ENCODE measurements at regions of chr5 and their contacts with region 1.

Region 1: DNA sequence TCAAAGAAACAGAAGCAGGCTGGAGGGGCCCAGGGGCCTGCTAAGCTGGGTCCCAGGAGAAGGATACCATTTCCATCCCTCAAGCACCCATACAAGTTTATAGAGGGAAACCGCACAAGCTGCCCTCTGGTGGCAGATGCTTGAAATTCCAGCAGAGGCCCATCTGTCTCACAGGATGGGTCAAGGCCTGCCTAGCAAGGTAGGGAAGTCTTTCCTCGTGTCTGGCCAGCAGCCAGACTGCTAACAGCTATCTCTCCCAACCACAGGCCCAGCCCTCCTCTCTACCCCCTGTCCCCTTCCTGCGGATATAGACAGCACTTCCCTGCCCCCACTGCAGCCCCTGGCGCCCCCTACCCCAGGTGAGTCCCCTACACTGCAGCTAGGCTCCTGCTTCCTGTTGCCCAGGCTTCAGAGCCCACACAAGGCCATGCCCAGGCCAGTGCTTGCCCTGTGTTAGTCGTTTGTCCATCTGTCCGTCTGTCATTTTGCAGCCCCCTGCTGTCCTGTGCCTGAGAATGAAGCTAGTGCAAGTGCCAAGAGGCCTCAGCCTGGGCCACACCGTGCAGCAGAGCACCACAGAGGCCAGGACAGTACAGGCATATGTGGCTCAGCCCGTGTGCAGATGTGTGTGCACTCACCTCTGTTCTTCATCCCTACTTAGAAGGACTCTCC is 26.2 kb downstream of the TCF7 start:
- DNase-seq: peak; percentile 63
- H3K4me3 ChIP-seq: no peak overlapping the region
- H3K27ac ChIP-seq: no peak overlapping the region
- H3K4me1 ChIP-seq: no peaks in the 10 kb centered on the region
- H3K27me3 ChIP-seq: no peaks in the 10 kb centered on the region
- CTCF ChIP-seq: peak; percentile 75 to 82
- POLR2A ChIP-seq: no peak

Region 2: DNA sequence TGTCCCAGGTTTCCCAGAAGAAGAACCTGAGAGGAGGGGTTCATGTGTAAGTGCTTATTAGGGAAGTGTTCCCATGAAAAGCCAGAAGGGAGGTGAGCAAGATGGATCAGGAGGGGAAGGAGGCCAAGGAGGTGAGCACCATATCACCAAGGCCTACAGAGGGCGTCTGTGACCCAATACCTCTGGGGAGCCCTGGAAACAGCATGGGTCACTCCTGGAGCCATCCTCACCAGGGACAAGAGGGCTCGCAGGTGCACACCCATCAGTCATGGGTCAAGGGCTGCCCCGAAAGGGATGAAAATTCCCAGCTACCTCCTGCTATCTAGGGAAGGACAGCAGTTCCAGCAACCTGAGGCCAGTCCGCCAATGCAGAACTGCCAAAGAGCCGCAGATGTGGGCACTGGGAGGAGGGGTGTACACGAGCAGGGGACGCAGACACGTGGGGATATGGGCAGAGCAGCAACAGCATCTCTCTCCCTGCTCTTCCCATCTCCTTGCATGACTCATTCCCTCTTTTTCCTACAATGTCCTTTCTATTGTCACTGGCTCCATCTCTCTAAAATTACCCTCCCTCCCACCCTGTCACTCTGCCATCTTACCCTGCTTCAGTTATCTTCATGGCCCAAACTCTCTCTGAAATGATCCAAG is 360.7 kb before region 1 on chr5:
- CTCF ChIA-PET with region 1: no interaction called
- POLR2A ChIA-PET with region 1: no interaction called
- dilution Hi-C with region 1: no loop called
- intact Hi-C with region 1: no loop called
- DNase-seq: no peak
- H3K4me3 ChIP-seq: no peak overlapping the region
- H3K27ac ChIP-seq: no peak overlapping the region
- H3K4me1 ChIP-seq: no peaks in the 10 kb centered on the region
- H3K27me3 ChIP-seq: peaks cover 0 to 5% of the 10 kb centered on the region in 2 experiments
- CTCF ChIP-seq: no peak
- POLR2A ChIP-seq: no peak

Region 3: DNA sequence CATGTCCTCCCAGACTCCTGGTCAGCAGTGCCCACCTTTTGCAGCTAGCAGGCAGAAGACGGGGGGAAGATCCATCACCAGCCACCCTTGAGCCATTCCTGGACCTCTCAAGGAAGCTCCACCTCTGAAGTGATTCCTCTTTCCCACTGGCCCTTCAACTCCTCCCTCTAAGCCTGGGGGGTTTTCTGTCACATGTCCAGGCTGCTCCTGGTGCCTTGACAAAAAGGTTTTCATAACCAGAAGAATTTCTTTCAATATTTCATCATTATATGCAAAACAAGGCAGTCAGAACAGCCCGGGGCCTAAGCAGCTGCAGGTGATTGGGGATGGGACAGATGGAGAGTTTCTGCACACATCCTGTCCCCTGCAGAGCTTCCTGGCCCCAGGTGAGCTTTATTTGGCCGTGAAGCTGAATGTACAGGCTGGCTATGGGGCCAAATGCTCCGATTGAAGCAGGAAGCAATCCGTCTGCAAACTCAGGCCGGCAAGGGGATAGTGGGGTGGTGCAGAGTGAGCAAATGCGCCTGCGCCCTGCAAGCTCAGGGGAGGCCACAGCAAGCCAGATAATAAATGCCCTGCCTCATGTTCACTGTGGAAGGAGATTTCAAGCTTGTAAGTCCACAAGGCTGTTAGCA is 345.8 kb before region 1 on chr5:
- CTCF ChIA-PET with region 1: no interaction called
- POLR2A ChIA-PET with region 1: no interaction called
- dilution Hi-C with region 1: no loop called
- intact Hi-C with region 1: no loop called
- DNase-seq: no peak
- H3K4me3 ChIP-seq: no peak overlapping the region
- H3K27ac ChIP-seq: no peak overlapping the region
- H3K4me1 ChIP-seq: no peaks in the 10 kb centered on the region
- H3K27me3 ChIP-seq: peaks cover 0 to 3% of the 10 kb centered on the region in 2 experiments
- CTCF ChIP-seq: no peak
- POLR2A ChIP-seq: no peak

Region 4: GRCh38 chr5:134095887-134096589 is 44.6 kb before region 1 on chr5:
- CTCF ChIA-PET with region 1: interaction called, 132 read pairs
- POLR2A ChIA-PET with region 1: no interaction called
- dilution Hi-C with region 1: no loop called
- intact Hi-C with region 1: no loop called
- DNase-seq: no peak
- H3K4me3 ChIP-seq: no peak overlapping the region
- H3K27ac ChIP-seq: no peak overlapping the region
- H3K4me1 ChIP-seq: no peaks in the 10 kb centered on the region
- H3K27me3 ChIP-seq: peaks cover 6 to 10% of the 10 kb centered on the region in 2 experiments
- CTCF ChIP-seq: no peak
- POLR2A ChIP-seq: no peak

Region 5: GRCh38 chr5:134101686-134102439 is 38.8 kb before region 1 on chr5:
- CTCF ChIA-PET with region 1: interaction called, 132 read pairs
- POLR2A ChIA-PET with region 1: interaction called, 3 read pairs
- dilution Hi-C with region 1: no loop called
- intact Hi-C with region 1: loop called (anchors 1 kb)
- DNase-seq: peak; percentile 48
- H3K4me3 ChIP-seq: no peak overlapping the region
- H3K27ac ChIP-seq: no peak overlapping the region
- H3K4me1 ChIP-seq: no peaks in the 10 kb centered on the region
- H3K27me3 ChIP-seq: peaks cover 0 to under 1% of the 10 kb centered on the region in 2 experiments
- CTCF ChIP-seq: peak; percentile 85 to 97
- POLR2A ChIP-seq: no peak

Region 6: GRCh38 chr5:134113902-134114875 is 26.5 kb before region 1 on chr5 and contains the start of gene TCF7:
- CTCF ChIA-PET with region 1: interaction called, 30 read pairs
- POLR2A ChIA-PET with region 1: no interaction called
- dilution Hi-C with region 1: no loop called
- intact Hi-C with region 1: no loop called
- DNase-seq: peak; percentile 59
- H3K4me3 ChIP-seq: peak within 1 kb of the TSS; percentile 44 to 74 (median 72)
- H3K27ac ChIP-seq: no peak within 1 kb of the TSS
- H3K4me1 ChIP-seq: peaks cover 9% of the 10 kb centered on the region
- H3K27me3 ChIP-seq: peaks cover 16% of the 10 kb centered on the region in 2 experiments
- CTCF ChIP-seq: no peak
- POLR2A ChIP-seq: no peak
- total RNA-seq, gene TCF7: 2.3 and 2.5 TPM in 2 replicates

Region 7: DNA sequence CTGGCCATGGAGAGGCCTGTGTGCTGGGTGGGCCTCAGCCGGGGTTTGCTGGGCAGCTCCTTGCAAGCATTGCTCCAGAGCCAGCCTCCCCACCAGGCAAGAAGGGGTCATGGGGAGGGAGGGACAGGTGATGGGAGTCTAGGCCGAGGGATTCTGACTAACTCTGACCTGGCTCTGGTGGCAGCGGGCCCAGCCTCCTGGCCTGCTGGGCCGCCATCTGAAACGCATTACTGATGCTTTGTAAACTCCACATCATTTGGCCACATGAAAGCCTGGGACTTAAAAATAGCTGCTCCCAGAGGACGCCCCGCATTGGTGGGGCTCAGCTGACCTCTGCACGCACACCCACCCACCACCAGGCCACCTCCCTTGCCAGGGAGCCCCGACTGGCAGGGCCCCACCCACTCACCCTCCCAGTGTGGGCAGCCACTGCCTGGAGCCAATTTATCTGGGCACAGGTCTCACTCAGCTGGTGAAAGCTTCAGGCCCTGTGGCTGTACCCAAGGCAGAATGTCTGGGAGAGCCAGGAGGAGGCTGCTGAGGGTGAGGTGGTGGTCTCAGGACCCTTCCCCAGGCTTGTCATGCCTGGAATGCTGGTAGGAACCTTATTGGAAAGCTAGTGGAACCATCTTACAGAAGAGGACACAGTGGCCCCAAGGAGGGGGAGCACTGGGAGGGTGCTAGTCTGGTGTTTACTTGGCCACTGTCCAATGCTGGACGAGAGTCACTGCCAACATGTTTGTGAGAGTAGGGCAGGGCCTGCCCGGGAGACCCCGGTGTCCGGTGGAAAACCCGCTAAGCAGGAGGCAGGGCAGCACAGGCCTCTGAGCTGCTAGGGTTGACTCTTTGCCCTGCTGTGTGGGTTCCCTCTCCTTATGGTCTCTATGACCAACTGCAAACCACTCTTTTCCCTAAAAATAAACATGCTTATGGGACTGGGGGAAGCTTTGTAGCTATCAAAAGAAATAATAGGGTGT is 15.3 kb before region 1 on chr5:
- CTCF ChIA-PET with region 1: interaction called, 50 read pairs
- POLR2A ChIA-PET with region 1: no interaction called
- dilution Hi-C with region 1: no loop called
- intact Hi-C with region 1: no loop called
- DNase-seq: peak; percentile 51
- H3K4me3 ChIP-seq: no peak overlapping the region
- H3K27ac ChIP-seq: no peak overlapping the region
- H3K4me1 ChIP-seq: peaks cover 9% of the 10 kb centered on the region
- H3K27me3 ChIP-seq: no peaks in the 10 kb centered on the region
- CTCF ChIP-seq: no peak
- POLR2A ChIP-seq: no peak

Region 8: GRCh38 chr5:134153657-134154056 is 13.0 kb after region 1 on chr5:
- CTCF ChIA-PET with region 1: interaction called, 25 read pairs
- POLR2A ChIA-PET with region 1: no interaction called
- dilution Hi-C with region 1: no loop called
- intact Hi-C with region 1: no loop called
- DNase-seq: no peak
- H3K4me3 ChIP-seq: no peak overlapping the region
- H3K27ac ChIP-seq: no peak overlapping the region
- H3K4me1 ChIP-seq: no peaks in the 10 kb centered on the region
- H3K27me3 ChIP-seq: no peaks in the 10 kb centered on the region
- CTCF ChIP-seq: no peak
- POLR2A ChIP-seq: no peak

Region 9: GRCh38 chr5:134394932-134395331 is 254.3 kb after region 1 on chr5:
- CTCF ChIA-PET with region 1: no interaction called
- POLR2A ChIA-PET with region 1: no interaction called
- dilution Hi-C with region 1: no loop called
- intact Hi-C with region 1: no loop called
- DNase-seq: no peak
- H3K4me3 ChIP-seq: no peak overlapping the region
- H3K27ac ChIP-seq: no peak overlapping the region
- H3K4me1 ChIP-seq: no peaks in the 10 kb centered on the region
- H3K27me3 ChIP-seq: no peaks in the 10 kb centered on the region
- CTCF ChIP-seq: no peak
- POLR2A ChIP-seq: no peak